Endothelial cell of umbilical vein (primary cell): ENCODE measurements at regions of chr11 and their contacts with region 1.

Region 1: DNA sequence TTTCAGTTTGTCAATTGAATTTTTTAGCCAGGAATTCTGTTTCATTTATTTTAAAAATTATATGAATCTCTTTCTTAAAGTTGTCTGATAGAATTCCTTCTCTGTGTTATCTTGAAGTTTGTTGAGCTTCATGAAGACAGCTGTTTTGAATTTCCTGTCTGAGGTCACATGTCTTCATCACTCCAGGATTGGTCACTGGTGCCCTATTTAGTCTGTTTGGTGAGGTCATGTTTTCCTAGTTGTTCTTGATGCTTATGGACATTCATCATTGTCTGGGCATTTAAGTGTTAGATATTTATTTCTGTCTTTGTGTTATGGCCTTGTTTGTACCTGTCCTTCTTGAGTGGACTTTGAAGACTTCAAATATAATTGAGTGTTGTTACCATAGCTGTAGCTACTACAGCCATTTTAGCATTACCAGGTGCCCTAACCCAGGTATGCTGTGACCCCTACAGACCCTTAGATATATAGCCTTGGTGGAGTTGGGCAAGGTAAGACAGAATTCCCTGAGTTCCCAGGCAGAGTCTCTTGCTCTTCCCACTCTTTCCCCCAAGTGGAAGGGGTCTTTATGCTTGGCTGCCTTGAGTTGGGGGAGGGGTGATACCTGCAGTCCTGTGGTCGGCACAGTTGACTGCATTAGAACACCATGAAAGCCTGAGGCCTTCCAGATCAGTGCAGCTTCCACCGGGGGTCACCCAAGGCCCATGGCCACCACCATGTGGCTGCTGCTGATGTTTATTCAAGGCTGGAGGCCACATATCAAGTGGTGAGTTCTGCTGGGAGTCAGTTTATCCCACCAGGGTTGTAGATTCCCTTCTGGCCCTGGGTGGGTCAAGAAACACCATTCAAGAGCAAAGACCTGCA is 229.6 kb downstream of the DYNC2H1 start:
- DNase-seq: peak; percentile 28
- H3K4me3 ChIP-seq: no peak overlapping the region
- H3K27ac ChIP-seq: no peak overlapping the region
- H3K4me1 ChIP-seq: peaks cover 2% of the 10 kb centered on the region
- H3K27me3 ChIP-seq: no peaks in the 10 kb centered on the region
- CTCF ChIP-seq: peak; percentile 30 to 41
- POLR2A ChIP-seq: no peak

Region 2: GRCh38 chr11:103234974-103235373 is 103.9 kb before region 1 on chr11:
- CTCF ChIA-PET with region 1: no interaction called
- POLR2A ChIA-PET with region 1: no interaction called
- dilution Hi-C with region 1: no loop called
- intact Hi-C with region 1: no loop called
- DNase-seq: no peak
- H3K4me3 ChIP-seq: no peak overlapping the region
- H3K27ac ChIP-seq: no peak overlapping the region
- H3K4me1 ChIP-seq: no peaks in the 10 kb centered on the region
- H3K27me3 ChIP-seq: no peaks in the 10 kb centered on the region
- CTCF ChIP-seq: no peak
- POLR2A ChIP-seq: no peak

Region 3: GRCh38 chr11:103433386-103434380 is 94.8 kb after region 1 on chr11:
- CTCF ChIA-PET with region 1: no interaction called
- POLR2A ChIA-PET with region 1: no interaction called
- dilution Hi-C with region 1: no loop called
- intact Hi-C with region 1: loop called (anchors 5 kb)
- DNase-seq: peak; percentile 84
- H3K4me3 ChIP-seq: no peak overlapping the region
- H3K27ac ChIP-seq: no peak overlapping the region
- H3K4me1 ChIP-seq: peaks cover 15% of the 10 kb centered on the region
- H3K27me3 ChIP-seq: no peaks in the 10 kb centered on the region
- CTCF ChIP-seq: no peak
- POLR2A ChIP-seq: no peak